Aorta (tissue), 5 donors: ENCODE measurements at regions of chr3 and their contacts with region 1.

Region 1: DNA sequence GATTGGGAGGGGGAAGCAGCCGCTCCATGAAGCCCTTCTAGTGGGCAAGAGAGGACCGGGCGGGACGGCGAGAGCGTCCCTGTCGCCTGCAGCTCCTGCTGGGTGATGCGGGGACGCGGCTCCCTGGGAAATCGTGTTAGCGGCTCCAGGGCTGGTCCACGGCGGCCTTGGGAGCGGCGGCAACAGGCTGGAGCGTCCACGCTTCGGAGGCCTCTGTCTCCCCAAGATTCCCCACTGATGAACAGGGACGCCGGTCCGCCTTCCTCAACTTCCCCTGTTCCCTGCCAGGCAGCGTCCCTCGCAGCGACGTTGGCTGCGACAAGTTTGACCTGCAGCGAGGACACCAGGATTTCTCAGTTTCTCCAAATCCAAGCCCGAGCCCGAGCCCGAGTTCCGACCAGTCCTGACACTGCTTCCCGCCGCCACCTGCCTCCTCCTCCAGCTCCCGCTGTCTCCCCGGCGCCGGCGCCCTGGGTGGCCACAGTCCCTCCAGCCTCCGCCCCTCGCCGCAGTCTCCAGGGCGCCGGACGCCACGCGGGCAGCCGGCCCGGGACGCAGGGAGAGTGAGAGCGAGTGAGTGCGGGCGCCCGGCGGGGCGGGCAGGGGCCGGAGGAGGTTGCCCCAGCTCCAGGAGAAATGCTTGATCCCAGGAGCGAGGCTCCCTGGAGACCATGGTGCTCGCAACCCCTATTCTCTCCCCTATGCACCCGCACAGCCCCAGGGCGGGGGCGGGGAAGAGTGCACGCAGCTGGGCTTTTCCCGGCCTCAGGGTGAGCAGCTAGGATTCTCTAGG is 78.1 kb upstream of the RNF7 start:
- DNase-seq: peak; percentile 79 to 91
- ATAC-seq: peak; percentile 89
- H3K4me3 ChIP-seq: peak overlapping the region; percentile 6 to 62
- H3K27ac ChIP-seq: peak overlapping the region; percentile 2 to 59
- H3K4me1 ChIP-seq: no peaks in the 10 kb centered on the region
- H3K27me3 ChIP-seq: no peaks in the 10 kb centered on the region

Region 2: DNA sequence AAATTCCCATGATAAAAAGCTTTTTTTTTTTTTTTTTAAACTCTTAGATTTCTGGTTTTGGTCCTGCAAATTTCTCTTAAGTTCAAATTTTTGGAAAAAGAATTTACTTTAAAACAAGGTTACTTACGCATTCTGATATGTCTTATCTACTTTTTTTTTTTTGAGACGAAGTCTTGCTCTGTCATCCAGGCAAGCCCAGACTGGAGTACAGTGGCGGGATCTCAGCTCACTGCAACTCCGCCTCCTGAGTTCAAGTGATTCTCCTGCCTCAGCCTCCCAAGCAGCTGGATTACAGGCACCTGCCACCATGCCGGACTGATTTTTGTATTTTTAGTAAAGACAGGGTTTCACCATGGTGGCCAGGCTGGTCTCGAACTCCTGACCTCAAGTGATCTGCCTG is 89.9 kb before region 1 on chr3:
- intact Hi-C with region 1: no loop called
- DNase-seq: no peak
- ATAC-seq: no peak
- H3K4me3 ChIP-seq: no peak overlapping the region
- H3K27ac ChIP-seq: no peak overlapping the region
- H3K4me1 ChIP-seq: no peaks in the 10 kb centered on the region
- H3K27me3 ChIP-seq: no peaks in the 10 kb centered on the region

Region 3: DNA sequence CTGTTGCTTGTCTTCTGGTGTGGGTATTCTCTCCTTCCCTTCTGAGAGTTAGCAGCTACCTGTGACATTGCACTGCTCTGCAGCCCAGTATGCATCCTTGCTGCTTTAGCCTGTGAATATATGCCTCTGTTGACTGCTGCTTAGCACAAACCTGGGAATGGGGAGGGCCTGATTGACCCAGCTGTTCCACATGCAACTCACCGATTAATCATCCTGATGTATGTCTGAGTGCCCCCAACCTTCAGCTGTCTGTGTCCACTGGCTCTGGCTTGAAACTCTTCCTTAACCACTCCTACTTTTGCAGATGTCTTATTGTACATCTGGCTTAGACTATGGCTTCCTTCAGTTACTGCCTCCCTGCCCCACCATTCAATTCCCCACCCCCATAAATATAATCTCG is 54.1 kb before region 1 on chr3:
- intact Hi-C with region 1: loop called in 1 of 2 experiments (anchors 5 kb)
- DNase-seq: no peak
- ATAC-seq: no peak
- H3K4me3 ChIP-seq: no peak overlapping the region
- H3K27ac ChIP-seq: no peak overlapping the region
- H3K4me1 ChIP-seq: peaks cover 0 to 4% of the 10 kb centered on the region in 2 donors
- H3K27me3 ChIP-seq: no peaks in the 10 kb centered on the region

Region 4: DNA sequence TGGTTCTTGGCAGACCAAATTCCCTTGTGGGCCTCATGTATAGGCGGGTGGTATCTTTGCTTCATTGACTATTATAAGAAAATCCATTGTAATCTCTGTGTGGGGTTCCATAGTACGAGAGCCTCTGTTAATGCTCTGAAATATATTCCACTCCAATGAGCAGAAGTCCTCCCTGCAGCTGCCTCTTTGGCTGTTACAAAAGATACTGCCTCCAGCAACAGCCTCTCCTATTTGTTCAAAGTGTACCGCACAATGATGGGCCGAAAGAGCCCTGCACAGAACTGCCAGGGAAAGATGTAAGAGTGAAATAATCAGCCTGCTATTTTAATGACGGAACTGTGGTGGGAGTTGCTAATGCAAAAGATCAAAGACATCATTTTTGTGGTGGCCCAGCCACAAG is 152.1 kb after region 1 on chr3:
- intact Hi-C with region 1: no loop called
- DNase-seq: no peak
- ATAC-seq: no peak
- H3K4me3 ChIP-seq: no peak overlapping the region
- H3K27ac ChIP-seq: no peak overlapping the region
- H3K4me1 ChIP-seq: no peaks in the 10 kb centered on the region
- H3K27me3 ChIP-seq: no peaks in the 10 kb centered on the region

Region 5: DNA sequence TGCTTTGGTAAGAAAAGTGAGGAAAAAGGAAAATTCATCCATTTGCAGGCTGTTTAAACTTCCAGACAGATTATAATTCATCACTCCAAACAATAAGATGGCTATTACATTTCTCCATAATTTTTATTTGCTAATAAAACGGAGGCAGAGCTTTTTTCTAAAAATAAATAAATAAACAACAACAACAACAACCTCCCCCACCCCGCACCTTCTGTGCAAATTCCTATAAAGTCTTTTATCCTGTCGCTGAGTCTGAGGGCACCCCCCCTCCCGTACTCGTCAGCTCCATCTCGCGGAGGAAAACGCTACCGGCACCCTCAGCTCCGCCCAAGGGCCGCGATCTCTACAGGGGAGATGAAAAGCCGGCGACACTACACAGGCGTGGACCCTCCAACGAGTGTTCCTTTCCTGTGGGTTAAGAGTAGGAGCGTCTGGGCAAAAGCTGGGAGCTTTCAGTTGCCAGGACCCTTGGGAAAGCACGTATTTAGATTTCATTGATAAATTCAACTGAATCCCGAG is 215.4 kb after region 1 on chr3:
- intact Hi-C with region 1: loop called in 1 of 2 experiments (anchors 5 kb)
- DNase-seq: peak; percentile 91 to 95
- ATAC-seq: peak; percentile 96
- H3K4me3 ChIP-seq: peak overlapping the region; percentile 73 to 90
- H3K27ac ChIP-seq: peak overlapping the region; percentile 97 to 99
- H3K4me1 ChIP-seq: peaks cover 1 to 8% of the 10 kb centered on the region in 2 donors
- H3K27me3 ChIP-seq: no peaks in the 10 kb centered on the region

Region 6: GRCh38 chr3:141905129-141905528 is 245.1 kb after region 1 on chr3:
- intact Hi-C with region 1: no loop called
- DNase-seq: no peak
- ATAC-seq: no peak
- H3K4me3 ChIP-seq: no peak overlapping the region
- H3K27ac ChIP-seq: no peak overlapping the region
- H3K4me1 ChIP-seq: no peaks in the 10 kb centered on the region
- H3K27me3 ChIP-seq: no peaks in the 10 kb centered on the region